ENCODE measurements at regions of chr4 and their contacts with region 1.

Region 1: GRCh38 chr4:178148106-178148505 is 705.9 kb upstream of the AGA start:
- DNase-seq: peak in 1 of 2 experiments; percentile 37
- H3K4me3 ChIP-seq: no peak overlapping the region
- H3K27ac ChIP-seq: no peak overlapping the region
- H3K4me1 ChIP-seq: no peaks in the 10 kb centered on the region
- H3K27me3 ChIP-seq: no peaks in the 10 kb centered on the region
- CTCF ChIP-seq: no peak

Region 2: GRCh38 chr4:178136736-178137345 is 11.3 kb before region 1 on chr4:
- CTCF ChIA-PET with region 1: no interaction called
- POLR2A ChIA-PET with region 1: no interaction called
- intact Hi-C with region 1: no loop called
- DNase-seq: no peak
- H3K4me3 ChIP-seq: no peak overlapping the region
- H3K27ac ChIP-seq: no peak overlapping the region
- H3K4me1 ChIP-seq: no peaks in the 10 kb centered on the region
- H3K27me3 ChIP-seq: no peaks in the 10 kb centered on the region
- CTCF ChIP-seq: no peak

Region 3: DNA sequence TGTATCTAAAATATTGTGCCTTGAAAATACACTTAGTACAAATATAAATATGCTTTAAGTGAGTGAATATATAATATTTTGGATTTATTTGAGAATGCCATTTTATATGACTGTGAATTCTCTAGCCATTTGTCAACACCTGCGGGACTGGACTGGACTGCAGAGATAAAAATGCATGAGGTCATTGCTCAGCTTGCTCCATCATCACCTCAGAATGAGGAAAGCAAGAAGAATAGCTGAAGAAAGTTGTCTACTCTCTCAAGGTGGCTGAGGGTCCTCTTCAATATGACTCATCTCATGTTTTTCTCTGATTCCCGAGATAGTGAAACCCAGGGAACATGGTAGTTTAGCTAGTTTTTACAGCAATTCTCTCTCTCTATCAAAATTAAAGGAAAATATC is 26.6 kb after region 1 on chr4:
- CTCF ChIA-PET with region 1: no interaction called
- POLR2A ChIA-PET with region 1: no interaction called
- intact Hi-C with region 1: loop called (anchors 1 kb)
- DNase-seq: peak in 1 of 2 experiments; percentile 14
- H3K4me3 ChIP-seq: no peak overlapping the region
- H3K27ac ChIP-seq: no peak overlapping the region
- H3K4me1 ChIP-seq: no peaks in the 10 kb centered on the region
- H3K27me3 ChIP-seq: no peaks in the 10 kb centered on the region
- CTCF ChIP-seq: no peak

Region 4: DNA sequence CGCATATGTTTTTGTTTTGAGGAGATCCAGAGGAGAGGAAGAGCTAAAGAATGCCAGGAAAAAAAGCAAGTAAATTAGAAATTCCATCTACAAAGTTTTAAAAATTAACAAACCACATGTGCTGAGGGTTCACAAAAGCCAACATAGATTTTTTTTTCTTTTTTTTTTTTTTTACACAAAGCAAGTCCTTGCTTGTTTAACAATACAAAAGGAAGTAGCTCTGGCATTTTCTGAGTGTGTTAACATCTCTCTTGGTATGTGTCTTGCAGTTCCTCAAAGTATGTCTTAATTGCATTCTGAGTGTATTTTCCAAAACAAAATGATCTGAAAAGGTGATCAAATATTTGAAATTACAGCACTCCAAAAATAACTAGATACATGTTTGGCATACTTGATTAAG is 976.9 kb after region 1 on chr4:
- CTCF ChIA-PET with region 1: no interaction called
- POLR2A ChIA-PET with region 1: no interaction called
- intact Hi-C with region 1: no loop called
- DNase-seq: no peak
- H3K4me3 ChIP-seq: no peak overlapping the region
- H3K27ac ChIP-seq: no peak overlapping the region
- H3K4me1 ChIP-seq: no peaks in the 10 kb centered on the region
- H3K27me3 ChIP-seq: no peaks in the 10 kb centered on the region
- CTCF ChIP-seq: no peak